ENCODE measurements at regions of chr12 and their contacts with region 1.

Region 1: DNA sequence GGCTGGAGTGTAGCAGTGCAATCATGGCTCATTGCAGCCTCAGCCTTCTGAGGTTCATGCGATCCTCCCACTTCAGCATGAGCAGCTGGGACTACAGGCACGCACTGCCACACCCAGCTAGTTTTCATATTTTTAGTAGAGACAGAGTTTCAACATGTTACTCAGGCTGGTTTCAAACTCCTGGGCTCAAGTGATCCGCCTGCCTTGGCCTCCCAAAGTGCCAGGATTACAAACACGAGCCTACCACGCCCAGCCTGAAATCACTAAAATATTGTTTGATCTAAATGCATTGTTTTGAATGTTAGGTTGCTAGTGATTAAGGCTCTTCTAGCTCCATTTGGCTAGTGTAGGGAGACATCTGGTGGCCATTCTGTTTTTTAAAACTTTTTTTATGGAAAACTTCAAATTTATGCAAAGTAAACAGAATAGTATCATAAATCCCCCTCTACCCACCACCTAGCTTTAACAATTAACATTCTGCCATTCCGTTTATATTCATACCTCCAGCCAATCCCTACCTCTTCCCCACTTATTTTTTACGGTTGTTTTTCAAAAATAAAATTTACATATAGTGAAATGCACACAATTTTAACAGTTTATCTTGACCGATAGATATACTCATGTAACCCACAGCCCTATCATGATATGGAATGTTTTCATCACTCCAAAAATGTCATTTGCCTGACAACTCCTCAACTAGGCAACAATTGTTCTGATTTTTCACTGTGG is 37.8 kb downstream of the MYO1H start:
- DNase-seq: no peak
- ATAC-seq: peak; percentile 67 to 76 (median 70)
- H3K4me3 ChIP-seq: no peak overlapping the region
- H3K27ac ChIP-seq: no peak overlapping the region
- H3K4me1 ChIP-seq: no peaks in the 10 kb centered on the region
- H3K27me3 ChIP-seq: no peaks in the 10 kb centered on the region
- CTCF ChIP-seq: peak; percentile 40 to 62 (median 55)
- POLR2A ChIP-seq: no peak

Region 2: DNA sequence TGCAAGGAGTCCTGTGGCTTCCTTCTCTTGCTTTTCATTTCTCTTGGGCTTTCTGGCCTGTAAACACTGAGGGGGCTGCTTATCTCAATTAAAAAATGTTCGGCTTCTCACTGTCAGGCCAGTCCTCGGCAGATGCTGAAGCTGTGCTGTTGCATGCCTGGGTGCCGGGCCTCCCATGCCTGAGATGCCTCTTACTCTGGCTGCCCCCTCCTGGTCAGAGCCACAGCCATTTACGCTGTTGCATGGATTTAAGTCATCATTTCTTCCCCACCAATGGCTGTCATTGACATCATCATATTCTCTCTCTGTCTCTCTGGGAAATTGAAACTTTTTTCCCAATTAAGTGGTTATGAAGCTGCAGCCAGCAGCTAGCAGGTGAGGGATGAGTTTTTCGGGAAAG is 130.1 kb before region 1 on chr12:
- intact Hi-C with region 1: loop called in 1 of 2 experiments (anchors 5 kb)
- DNase-seq: no peak
- ATAC-seq: no peak
- H3K4me3 ChIP-seq: no peak overlapping the region
- H3K27ac ChIP-seq: no peak overlapping the region
- H3K4me1 ChIP-seq: no peaks in the 10 kb centered on the region
- H3K27me3 ChIP-seq: no peaks in the 10 kb centered on the region
- CTCF ChIP-seq: no peak
- POLR2A ChIP-seq: no peak

Region 3: GRCh38 chr12:109264943-109265650 is 120.4 kb before region 1 on chr12:
- intact Hi-C with region 1: loop called in 1 of 2 experiments (anchors 5 kb)
- DNase-seq: no peak
- ATAC-seq: peak in 3 of 4 donors; percentile 7 to 45 (median 7)
- H3K4me3 ChIP-seq: no peak overlapping the region
- H3K27ac ChIP-seq: no peak overlapping the region
- H3K4me1 ChIP-seq: no peaks in the 10 kb centered on the region
- H3K27me3 ChIP-seq: no peaks in the 10 kb centered on the region
- CTCF ChIP-seq: no peak
- POLR2A ChIP-seq: no peak